CD8-positive, alpha-beta T cell (primary cell): ENCODE measurements at regions of chr3 and their contacts with region 1.

Region 1: DNA sequence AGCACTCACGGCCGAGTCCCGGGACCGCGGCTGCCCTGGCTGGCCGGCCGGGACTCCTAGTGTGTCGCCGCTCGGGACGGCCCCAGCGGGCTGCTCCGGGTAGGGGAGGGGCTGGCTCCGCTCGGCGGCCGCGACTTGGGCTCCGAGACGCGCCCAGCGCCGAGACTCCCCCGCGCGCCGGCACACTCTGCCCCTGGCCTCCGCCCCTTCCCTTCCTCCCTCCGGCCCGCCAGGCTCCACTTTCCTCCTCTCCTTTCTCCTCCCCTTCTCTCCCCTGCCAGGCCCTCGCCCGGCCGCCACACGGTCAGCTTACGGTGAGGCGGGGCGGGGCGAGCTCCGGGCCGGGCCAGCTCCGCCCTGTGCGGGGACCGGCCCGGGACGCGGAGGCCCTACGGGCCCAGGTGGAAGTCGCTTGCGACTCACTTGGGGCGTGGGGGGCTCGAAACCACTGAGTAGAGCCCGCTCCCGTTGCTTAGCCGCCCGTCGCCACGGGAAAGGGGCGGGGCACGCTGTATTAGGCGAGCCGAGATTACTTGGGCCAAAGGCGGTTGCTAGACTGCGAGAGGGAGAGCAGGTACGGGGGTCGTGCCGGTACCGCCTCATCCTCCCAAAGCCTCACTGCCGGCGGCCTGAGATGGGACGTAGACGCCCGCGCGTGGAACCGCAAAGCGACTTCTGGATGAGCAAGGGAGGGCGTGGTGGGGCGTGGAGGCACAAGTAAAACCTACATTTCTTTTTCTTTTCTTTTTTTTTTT is at the start of gene ITGB5:
- DNase-seq: peak in 6 of 9 experiments; percentile 10 to 54 (median 22)
- ATAC-seq: peak; percentile 53
- H3K4me3 ChIP-seq: peak within 1 kb of the TSS; percentile 50 to 57
- H3K4me3 Mint-ChIP-seq: peak within 1 kb of the TSS; percentile 59
- H3K27ac ChIP-seq: no peak within 1 kb of the TSS
- H3K27ac Mint-ChIP-seq: no peak within 1 kb of the TSS
- H3K4me1 ChIP-seq: peaks cover 4% of the 10 kb centered on the region
- H3K4me1 Mint-ChIP-seq: peaks cover 6% of the 10 kb centered on the region
- H3K27me3 ChIP-seq: peaks cover 11 to 12% of the 10 kb centered on the region in 2 experiments
- H3K27me3 Mint-ChIP-seq: peaks cover 53% of the 10 kb centered on the region
- CTCF ChIP-seq: no peak
- total RNA-seq, gene ITGB5: 0.56 TPM in 1 of 2 experiments, not detected in the other

Region 2: GRCh38 chr3:124834723-124835718 is 52.3 kb before region 1 on chr3:
- CTCF ChIA-PET with region 1: no interaction called
- POLR2A ChIA-PET with region 1: no interaction called
- intact Hi-C with region 1: loop called in 1 of 2 experiments (anchors 5 kb)
- DNase-seq: peak; percentile 2 to 74 (median 61)
- ATAC-seq: peak; percentile 87
- H3K4me3 ChIP-seq: peak overlapping the region; percentile 39 to 57
- H3K4me3 Mint-ChIP-seq: peak overlapping the region; percentile 85
- H3K27ac ChIP-seq: no peak overlapping the region
- H3K27ac Mint-ChIP-seq: peak overlapping the region; percentile 74
- H3K4me1 ChIP-seq: peaks cover 12% of the 10 kb centered on the region
- H3K4me1 Mint-ChIP-seq: peaks cover 17% of the 10 kb centered on the region
- H3K27me3 ChIP-seq: no peaks in the 10 kb centered on the region
- H3K27me3 Mint-ChIP-seq: no peaks in the 10 kb centered on the region
- CTCF ChIP-seq: no peak

Region 3: DNA sequence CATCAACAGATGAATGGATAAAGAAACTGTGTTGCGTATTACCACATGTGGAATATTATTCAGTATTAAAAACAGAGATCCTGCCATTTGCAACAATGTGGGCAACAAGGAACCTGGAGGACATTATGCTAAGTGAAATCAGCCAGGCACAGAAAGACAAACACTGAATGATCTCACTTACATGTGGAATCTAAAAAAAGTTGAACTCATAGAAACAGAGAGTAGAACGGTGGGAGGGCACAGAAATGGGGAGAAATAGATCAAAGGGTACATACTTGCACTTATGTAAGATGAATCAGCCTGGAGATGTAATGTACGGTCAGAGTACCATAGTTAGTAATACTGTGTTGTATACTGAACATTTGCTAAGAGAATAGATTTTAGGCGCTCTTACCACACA is 77.0 kb after region 1 on chr3:
- CTCF ChIA-PET with region 1: no interaction called
- POLR2A ChIA-PET with region 1: no interaction called
- intact Hi-C with region 1: no loop called
- DNase-seq: no peak
- ATAC-seq: no peak
- H3K4me3 ChIP-seq: no peak overlapping the region
- H3K4me3 Mint-ChIP-seq: no peak overlapping the region
- H3K27ac ChIP-seq: no peak overlapping the region
- H3K27ac Mint-ChIP-seq: no peak overlapping the region
- H3K4me1 ChIP-seq: no peaks in the 10 kb centered on the region
- H3K4me1 Mint-ChIP-seq: no peaks in the 10 kb centered on the region
- H3K27me3 ChIP-seq: no peaks in the 10 kb centered on the region
- H3K27me3 Mint-ChIP-seq: peaks cover 3% of the 10 kb centered on the region
- CTCF ChIP-seq: no peak